Activated T-helper 1 cell treated with anti-CD3 and anti-CD28 coated beads, Interleukin-12 subunit alpha, Interleukin-12 subunit beta, Interleukin-2, Interleukin-4 antibody, amounts not matched to agents 30 ng/mL and 10 ng/mL and 1 ng/mL, durations not matched to agents 14 hours and 24 hours and 36 hours (primary cell): ENCODE measurements at regions of chr6 and their contacts with region 1.

Region 1: GRCh38 chr6:13814176-13814937 is at the start of gene MCUR1:
- DNase-seq: peak; percentile 80
- H3K4me3 Mint-ChIP-seq: peak within 1 kb of the TSS; percentile 85
- H3K27ac Mint-ChIP-seq: peak within 1 kb of the TSS; percentile 52
- H3K4me1 Mint-ChIP-seq: peaks cover 38% of the 10 kb centered on the region
- H3K27me3 Mint-ChIP-seq: peaks cover 2% of the 10 kb centered on the region
- total RNA-seq, gene MCUR1: 37.8 and 40.2 TPM in 2 replicates

Region 2: GRCh38 chr6:13487122-13488014 is 327.0 kb before region 1 on chr6 and contains the start of gene GFOD1:
- intact Hi-C with region 1: loop called (anchors 1 kb)
- DNase-seq: peak; percentile 80
- H3K4me3 Mint-ChIP-seq: peak within 1 kb of the TSS; percentile 89
- H3K27ac Mint-ChIP-seq: peak within 1 kb of the TSS; percentile 72
- H3K4me1 Mint-ChIP-seq: peaks cover 39% of the 10 kb centered on the region
- H3K27me3 Mint-ChIP-seq: peaks cover 10% of the 10 kb centered on the region
- total RNA-seq, gene GFOD1: 12.4 and 13.6 TPM in 2 replicates

Region 3: GRCh38 chr6:13508711-13509705 is 305.3 kb before region 1 on chr6:
- intact Hi-C with region 1: no loop called
- DNase-seq: no peak
- H3K4me3 Mint-ChIP-seq: no peak overlapping the region
- H3K27ac Mint-ChIP-seq: no peak overlapping the region
- H3K4me1 Mint-ChIP-seq: no peaks in the 10 kb centered on the region
- H3K27me3 Mint-ChIP-seq: peaks cover 7% of the 10 kb centered on the region

Region 4: GRCh38 chr6:13563009-13563408 is 251.3 kb before region 1 on chr6:
- intact Hi-C with region 1: no loop called
- DNase-seq: no peak
- H3K4me3 Mint-ChIP-seq: no peak overlapping the region
- H3K27ac Mint-ChIP-seq: no peak overlapping the region
- H3K4me1 Mint-ChIP-seq: no peaks in the 10 kb centered on the region
- H3K27me3 Mint-ChIP-seq: peaks cover 16% of the 10 kb centered on the region

Region 5: GRCh38 chr6:13614926-13615798 is 199.2 kb before region 1 on chr6 and contains the start of gene NOL7:
- intact Hi-C with region 1: loop called (anchors 1 kb)
- DNase-seq: peak; percentile 98
- H3K4me3 Mint-ChIP-seq: peak within 1 kb of the TSS; percentile 99
- H3K27ac Mint-ChIP-seq: peak within 1 kb of the TSS; percentile 87
- H3K4me1 Mint-ChIP-seq: peaks cover 54% of the 10 kb centered on the region
- H3K27me3 Mint-ChIP-seq: no peaks in the 10 kb centered on the region
- total RNA-seq, gene NOL7: 97.7 and 100 TPM in 2 replicates

Region 6: DNA sequence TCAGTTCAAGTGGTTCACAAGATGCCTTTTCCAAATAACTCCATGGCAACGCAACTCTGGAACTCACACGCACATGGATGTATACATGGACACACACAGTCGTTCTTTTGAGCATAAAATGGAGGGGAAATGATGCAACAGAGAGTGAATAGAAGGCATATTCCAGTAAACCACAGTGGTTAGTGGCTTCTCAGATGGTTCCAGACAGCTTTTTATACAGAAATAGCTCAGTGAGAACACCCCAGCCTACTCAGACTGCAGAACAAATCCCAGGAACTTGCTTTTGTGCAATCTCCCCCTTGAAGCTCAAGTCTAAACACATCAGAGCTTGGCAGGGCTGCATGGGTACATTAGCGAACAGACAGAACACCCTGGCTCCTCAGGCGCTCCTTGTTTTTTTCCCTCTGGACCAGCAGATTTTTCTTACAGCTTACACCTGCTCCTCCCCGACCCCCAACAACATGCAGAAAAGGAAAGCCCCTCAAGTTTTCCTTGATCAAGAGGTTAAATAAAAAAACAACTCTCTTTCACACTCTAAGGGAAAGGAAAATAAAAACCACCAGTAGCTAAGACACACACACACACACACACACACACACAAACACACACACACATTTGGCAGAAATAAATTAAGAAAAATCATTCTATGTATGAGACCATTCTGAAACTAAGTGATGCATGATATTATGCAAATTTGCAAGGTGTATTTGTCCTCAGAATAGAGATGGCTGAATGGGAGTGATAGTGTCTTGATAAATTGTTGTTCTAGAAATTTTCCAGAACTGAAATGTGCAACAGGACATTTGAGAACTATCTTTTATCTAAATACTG is 51.5 kb before region 1 on chr6:
- intact Hi-C with region 1: loop called (anchors 1 kb)
- DNase-seq: peak; percentile 34
- H3K4me3 Mint-ChIP-seq: peak overlapping the region; percentile 75
- H3K27ac Mint-ChIP-seq: peak overlapping the region; percentile 92
- H3K4me1 Mint-ChIP-seq: peaks cover 52% of the 10 kb centered on the region
- H3K27me3 Mint-ChIP-seq: peaks cover 2% of the 10 kb centered on the region

Region 7: DNA sequence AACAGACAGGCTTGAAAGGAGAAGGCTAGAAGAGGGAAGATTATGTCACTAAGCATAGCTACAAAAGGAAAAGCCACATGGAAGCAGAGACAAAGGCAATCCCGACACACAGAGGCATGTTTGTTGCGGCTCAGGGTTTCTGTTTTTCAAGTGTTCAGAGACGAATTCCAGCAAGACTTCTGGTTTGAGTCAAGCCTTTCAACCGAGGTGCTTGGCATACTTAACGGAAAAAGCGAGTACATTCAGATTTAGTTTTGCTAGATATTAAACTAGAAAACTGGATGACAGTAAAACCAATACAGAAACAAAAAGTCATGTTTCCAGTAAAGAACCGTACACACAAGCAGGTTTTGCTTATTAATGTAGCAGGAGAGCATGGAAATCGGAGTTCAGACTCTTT is 27.2 kb before region 1 on chr6:
- intact Hi-C with region 1: loop called (anchors 1 kb)
- DNase-seq: no peak
- H3K4me3 Mint-ChIP-seq: peak overlapping the region; percentile 41
- H3K27ac Mint-ChIP-seq: peak overlapping the region; percentile 82
- H3K4me1 Mint-ChIP-seq: peaks cover 33% of the 10 kb centered on the region
- H3K27me3 Mint-ChIP-seq: no peaks in the 10 kb centered on the region

Region 8: GRCh38 chr6:13873285-13874190 is 59.2 kb after region 1 on chr6:
- intact Hi-C with region 1: loop called (anchors 5 kb)
- DNase-seq: peak; percentile 50
- H3K4me3 Mint-ChIP-seq: peak overlapping the region; percentile 66
- H3K27ac Mint-ChIP-seq: no peak overlapping the region
- H3K4me1 Mint-ChIP-seq: peaks cover 16% of the 10 kb centered on the region
- H3K27me3 Mint-ChIP-seq: peaks cover 12% of the 10 kb centered on the region

Region 9: GRCh38 chr6:14117158-14118090 is 303.1 kb after region 1 on chr6 and contains the start of gene CD83:
- intact Hi-C with region 1: loop called (anchors 5 kb)
- DNase-seq: peak; percentile 82
- H3K4me3 Mint-ChIP-seq: peak within 1 kb of the TSS; percentile 96
- H3K27ac Mint-ChIP-seq: peak within 1 kb of the TSS; percentile 83
- H3K4me1 Mint-ChIP-seq: peaks cover 46% of the 10 kb centered on the region
- H3K27me3 Mint-ChIP-seq: peaks cover 36% of the 10 kb centered on the region
- total RNA-seq, gene CD83: 101 and 107 TPM in 2 replicates

Region 10: DNA sequence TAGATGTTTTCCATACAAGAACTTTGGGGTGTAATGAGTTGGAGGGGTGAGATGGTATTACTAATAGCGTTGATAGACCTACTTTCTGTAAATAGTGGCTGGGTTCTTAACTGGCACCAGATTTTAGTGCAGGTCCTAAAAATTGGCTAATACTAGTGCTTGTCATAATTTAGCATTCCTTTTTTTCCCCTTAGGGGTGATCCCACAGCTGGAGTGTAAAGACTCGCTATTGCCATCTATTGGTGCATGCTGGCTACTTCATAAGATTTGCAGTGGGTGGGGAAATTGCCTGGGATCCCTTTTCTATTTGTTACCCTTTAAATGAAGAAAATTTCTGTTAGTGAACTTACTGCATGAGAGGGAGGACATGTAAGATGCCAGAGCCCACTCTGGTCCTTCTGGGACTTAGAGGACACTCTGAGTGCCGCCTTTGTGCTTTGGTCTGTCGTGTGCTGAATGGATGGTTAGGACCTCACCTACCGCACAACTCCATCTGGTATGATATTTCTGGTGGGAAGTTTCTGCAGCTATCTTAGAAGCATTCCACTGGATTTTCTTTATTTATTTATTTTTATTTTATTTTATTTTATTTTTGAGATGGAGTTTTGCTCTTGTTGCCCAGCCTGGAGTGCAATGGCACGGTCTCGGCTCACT is 1627.0 kb after region 1 on chr6:
- intact Hi-C with region 1: no loop called
- DNase-seq: no peak
- H3K4me3 Mint-ChIP-seq: no peak overlapping the region
- H3K27ac Mint-ChIP-seq: no peak overlapping the region
- H3K4me1 Mint-ChIP-seq: peaks cover 83% of the 10 kb centered on the region
- H3K27me3 Mint-ChIP-seq: no peaks in the 10 kb centered on the region